HEK293 (cell line): ENCODE measurements at regions of chr9 and their contacts with region 1.

Region 1: GRCh38 chr9:84261082-84261746 is 79.3 kb downstream of the SLC28A3 start:
- H3K4me3 ChIP-seq: no peak overlapping the region
- H3K27ac ChIP-seq: no peak overlapping the region
- H3K4me1 ChIP-seq: no peaks in the 10 kb centered on the region
- CTCF ChIP-seq: peak; percentile 21; the same call in 1 of the 2 replicates

Region 2: DNA sequence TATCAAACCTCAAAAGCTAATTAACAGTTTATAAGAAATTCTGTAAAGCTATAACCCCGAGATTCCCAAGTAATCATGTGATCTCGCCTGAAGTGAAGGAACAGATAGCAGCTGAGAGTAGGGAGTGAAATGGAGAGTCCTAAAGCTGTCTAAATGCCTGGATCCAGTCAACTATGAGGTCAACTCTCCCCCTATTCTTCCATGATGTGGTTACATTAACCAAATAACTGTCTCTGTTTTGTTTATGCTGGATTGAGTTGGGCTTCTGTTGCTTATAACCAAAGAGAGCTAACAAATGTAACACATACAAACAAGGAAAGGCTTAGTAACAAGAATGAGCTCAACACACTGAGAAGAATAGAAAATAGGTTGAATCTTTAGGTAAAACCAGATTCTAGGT is 485.3 kb before region 1 on chr9:
- CTCF ChIA-PET with region 1: no interaction called
- POLR2A ChIA-PET with region 1: interaction called, 10 read pairs
- H3K4me3 ChIP-seq: no peak overlapping the region
- H3K27ac ChIP-seq: no peak overlapping the region
- H3K4me1 ChIP-seq: no peaks in the 10 kb centered on the region
- CTCF ChIP-seq: no peak

Region 3: GRCh38 chr9:83937911-83938323 is 323.3 kb before region 1 on chr9:
- CTCF ChIA-PET with region 1: interaction called, 23 read pairs
- POLR2A ChIA-PET with region 1: interaction called, 4 read pairs
- H3K4me3 ChIP-seq: no peak overlapping the region
- H3K27ac ChIP-seq: no peak overlapping the region
- H3K4me1 ChIP-seq: 0 out of 2 replicates have a peak, but pooled peaks cover 2% of the 10 kb centered on the region
- CTCF ChIP-seq: no peak

Region 4: DNA sequence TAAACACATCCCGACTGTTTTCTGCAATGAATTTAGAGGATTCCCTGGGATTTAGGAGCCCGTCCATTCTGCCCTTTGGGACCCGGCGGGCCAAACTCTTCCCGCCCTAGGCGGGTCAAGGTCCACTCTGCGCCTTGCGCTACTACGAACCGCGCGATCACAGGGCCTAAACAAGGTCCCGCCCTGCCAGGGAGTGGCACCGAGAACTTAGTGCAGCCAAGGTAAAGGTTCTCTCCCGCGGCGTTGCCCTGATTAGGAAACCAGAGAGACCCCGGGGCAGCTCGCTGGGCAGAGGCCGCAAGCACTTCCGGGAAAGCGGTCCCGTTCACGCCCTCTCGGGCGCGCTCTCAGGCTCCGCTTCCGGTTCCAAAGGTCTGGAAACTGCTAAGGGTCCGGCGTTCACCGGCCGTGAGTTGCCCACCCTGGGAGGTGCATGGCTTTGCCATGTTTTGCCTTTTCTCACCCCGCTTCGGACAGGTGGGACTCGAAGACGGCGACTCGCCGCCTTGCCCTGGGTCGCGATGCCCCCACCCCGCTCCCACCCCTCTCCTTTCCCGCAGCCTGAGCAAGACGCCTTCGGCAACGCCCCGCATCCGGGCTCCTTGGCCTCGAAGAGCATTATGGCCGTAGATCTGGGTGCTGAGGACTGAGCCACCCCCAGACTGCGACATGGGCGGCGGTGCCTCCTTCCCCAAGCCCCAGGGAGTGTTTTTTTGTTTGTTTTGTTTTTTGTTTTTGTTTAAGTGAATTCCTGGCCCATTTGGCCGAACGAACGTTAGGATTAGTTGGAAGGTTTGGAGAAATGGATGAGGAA is 304.6 kb before region 1 on chr9:
- CTCF ChIA-PET with region 1: interaction called, 12 read pairs
- POLR2A ChIA-PET with region 1: no interaction called
- H3K4me3 ChIP-seq: peak overlapping the region; percentile 78
- H3K27ac ChIP-seq: peak overlapping the region; percentile 86
- H3K4me1 ChIP-seq: no peaks in the 10 kb centered on the region
- CTCF ChIP-seq: no peak

Region 5: GRCh38 chr9:84170521-84171141 is 90.6 kb before region 1 on chr9:
- CTCF ChIA-PET with region 1: interaction called, 17 read pairs
- POLR2A ChIA-PET with region 1: no interaction called
- H3K4me3 ChIP-seq: no peak overlapping the region
- H3K27ac ChIP-seq: no peak overlapping the region
- H3K4me1 ChIP-seq: no peaks in the 10 kb centered on the region
- CTCF ChIP-seq: no peak

Region 6: GRCh38 chr9:84230355-84231145 is 30.7 kb before region 1 on chr9:
- CTCF ChIA-PET with region 1: interaction called, 10 read pairs
- POLR2A ChIA-PET with region 1: no interaction called
- H3K4me3 ChIP-seq: no peak overlapping the region
- H3K27ac ChIP-seq: no peak overlapping the region
- H3K4me1 ChIP-seq: no peaks in the 10 kb centered on the region
- CTCF ChIP-seq: no peak

Region 7: DNA sequence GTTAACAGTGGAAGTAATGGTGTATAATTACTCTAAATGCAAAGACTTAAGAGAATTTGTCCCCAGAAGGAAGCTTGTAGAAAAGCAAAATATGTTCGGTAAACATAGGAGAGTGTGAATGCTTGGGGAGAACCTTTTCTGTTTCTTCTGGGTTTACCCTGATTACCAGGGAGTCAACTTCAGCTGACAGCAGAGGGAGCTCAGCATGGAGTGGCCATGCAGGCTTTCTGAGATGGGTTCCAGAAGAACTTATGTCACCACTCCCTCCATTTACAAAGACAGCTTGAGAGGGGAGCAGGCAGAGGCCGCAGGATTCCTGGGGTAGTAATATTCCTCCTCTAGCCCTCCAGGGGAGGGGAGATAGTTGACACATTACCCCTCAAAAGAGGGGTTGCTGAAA is 16.4 kb before region 1 on chr9:
- CTCF ChIA-PET with region 1: interaction called, 13 read pairs
- POLR2A ChIA-PET with region 1: no interaction called
- H3K4me3 ChIP-seq: no peak overlapping the region
- H3K27ac ChIP-seq: no peak overlapping the region
- H3K4me1 ChIP-seq: no peaks in the 10 kb centered on the region
- CTCF ChIP-seq: no peak